Heart right ventricle (tissue), 16 donors: ENCODE measurements at regions of chr11 and their contacts with region 1.

Region 1: DNA sequence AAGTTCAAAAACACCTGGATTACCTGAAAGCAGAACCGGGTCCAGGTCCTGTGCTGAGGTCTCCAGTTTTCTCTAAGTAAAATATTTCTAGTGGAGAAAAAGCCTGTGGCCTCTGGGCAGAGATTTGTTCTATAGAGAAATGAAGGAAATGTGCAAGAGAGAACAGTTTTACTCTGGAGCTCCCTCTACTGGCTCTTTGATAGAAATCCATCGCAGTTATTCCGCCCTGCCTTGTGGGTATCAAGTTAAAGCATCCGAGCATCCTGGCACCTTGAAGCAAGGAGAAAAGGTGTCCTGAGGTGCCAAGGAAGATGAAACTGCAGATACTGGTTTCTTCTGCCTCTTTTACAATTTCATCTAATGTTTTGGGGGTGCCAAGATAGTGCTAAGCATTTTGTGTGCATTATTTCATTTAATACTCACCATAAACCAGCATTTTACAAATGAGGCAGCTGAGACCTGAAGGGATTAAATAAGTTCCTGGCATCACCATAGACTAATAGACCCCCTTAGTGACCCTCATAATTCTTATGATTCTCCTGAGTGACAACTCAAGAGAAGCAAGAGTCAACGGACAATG is 113.1 kb upstream of the HSD17B12 start:
- DNase-seq: no peak
- ATAC-seq: no peak
- H3K4me3 ChIP-seq: no peak overlapping the region
- H3K27ac ChIP-seq: no peak overlapping the region
- H3K4me1 ChIP-seq: no peaks in the 10 kb centered on the region
- H3K27me3 ChIP-seq: peaks cover 0 to 63% (median 48%) of the 10 kb centered on the region in 7 donors
- CTCF ChIP-seq: peak; percentile 33 to 80 (median 70)

Region 2: DNA sequence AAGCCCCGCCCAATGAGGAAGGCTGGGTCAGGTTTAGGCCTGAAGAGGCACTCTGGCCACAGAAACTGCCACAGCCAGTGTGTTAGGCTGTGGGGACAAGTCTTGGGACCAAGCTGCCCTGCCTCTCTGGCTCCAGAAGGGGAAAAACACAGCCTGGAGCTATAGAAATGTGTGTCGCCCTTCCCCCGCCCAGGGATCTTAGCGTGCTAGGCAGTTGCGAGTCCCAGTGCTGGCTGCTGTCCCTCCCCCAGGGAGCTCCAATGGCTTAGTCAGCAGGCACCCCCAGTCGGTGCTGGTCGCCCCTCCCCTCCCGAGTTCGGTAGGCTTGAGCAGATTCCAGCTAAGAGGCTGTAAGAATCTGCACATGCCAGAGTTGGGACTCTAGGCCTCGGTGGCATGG is 355.2 kb before region 1 on chr11:
- intact Hi-C with region 1: no loop called
- DNase-seq: no peak
- ATAC-seq: no peak
- H3K4me3 ChIP-seq: no peak overlapping the region
- H3K27ac ChIP-seq: no peak overlapping the region
- H3K4me1 ChIP-seq: no peaks in the 10 kb centered on the region
- H3K27me3 ChIP-seq: peaks cover 0 to 3% (median 0%) of the 10 kb centered on the region in 7 donors
- CTCF ChIP-seq: no peak

Region 3: DNA sequence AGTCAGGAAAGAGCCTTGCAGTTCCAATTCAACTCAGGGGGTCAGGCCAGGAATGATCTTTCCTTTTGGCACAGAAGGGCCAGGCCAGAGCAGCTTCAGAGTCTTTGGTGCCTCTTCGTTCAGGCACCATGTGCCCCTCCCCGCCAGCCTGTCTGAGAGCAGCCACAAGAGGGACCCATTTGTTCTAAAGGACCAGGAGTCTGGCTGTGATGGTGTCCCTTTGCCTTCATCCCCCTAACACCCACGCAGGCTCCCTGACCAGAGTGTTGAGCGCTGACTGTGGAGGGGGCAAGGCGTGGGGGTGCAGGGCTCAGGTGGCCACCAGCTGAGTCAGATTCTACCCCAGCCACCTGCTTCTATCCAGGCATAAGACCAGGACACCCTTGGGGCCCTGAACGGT is 52.4 kb before region 1 on chr11:
- intact Hi-C with region 1: loop called in 1 of 10 experiments (anchors 10 kb)
- DNase-seq: no peak
- ATAC-seq: no peak
- H3K4me3 ChIP-seq: no peak overlapping the region
- H3K27ac ChIP-seq: no peak overlapping the region
- H3K4me1 ChIP-seq: no peaks in the 10 kb centered on the region
- H3K27me3 ChIP-seq: peaks cover 0 to 10% (median 5%) of the 10 kb centered on the region in 7 donors
- CTCF ChIP-seq: peak in 4 of 9 donors; percentile 8 to 22 (median 17)

Region 4: DNA sequence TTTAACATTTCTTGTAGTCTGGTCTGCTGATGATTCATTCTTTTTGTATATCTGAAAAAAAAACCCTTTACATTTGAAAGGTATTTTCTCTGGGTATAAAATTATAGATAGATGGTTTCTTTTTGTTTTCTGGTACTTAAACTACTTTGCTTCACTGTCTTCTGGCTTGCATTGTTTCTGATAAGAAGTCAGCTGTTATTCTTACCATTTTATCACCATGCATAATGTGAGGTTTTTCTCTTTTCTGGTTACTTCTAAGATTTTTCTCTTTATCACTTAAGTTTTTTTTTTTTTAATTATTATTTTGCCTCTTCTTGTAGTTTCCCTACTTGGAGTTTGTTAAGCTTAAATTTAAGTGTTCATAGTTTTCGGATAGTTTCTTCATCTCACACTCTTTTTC is 197.7 kb after region 1 on chr11:
- intact Hi-C with region 1: no loop called
- DNase-seq: no peak
- ATAC-seq: no peak
- H3K4me3 ChIP-seq: no peak overlapping the region
- H3K27ac ChIP-seq: no peak overlapping the region
- H3K4me1 ChIP-seq: peaks cover 0 to 7% (median 0%) of the 10 kb centered on the region in 9 donors
- H3K27me3 ChIP-seq: no peaks in the 10 kb centered on the region
- CTCF ChIP-seq: no peak

Region 5: GRCh38 chr11:43802509-43802908 is 235.0 kb after region 1 on chr11:
- intact Hi-C with region 1: loop called in 1 of 10 experiments (anchors 10 kb)
- DNase-seq: no peak
- ATAC-seq: no peak
- H3K4me3 ChIP-seq: no peak overlapping the region
- H3K27ac ChIP-seq: no peak overlapping the region
- H3K4me1 ChIP-seq: no peaks in the 10 kb centered on the region
- H3K27me3 ChIP-seq: no peaks in the 10 kb centered on the region
- CTCF ChIP-seq: peak in 5 of 9 donors; percentile 8 to 35 (median 19)